ENCODE measurements at regions of chr6 and their contacts with region 1.

Region 1: GRCh38 chr6:79777713-79778579 is 146.8 kb downstream of the SH3BGRL2 start:
- DNase-seq: peak; percentile 62 to 93 (median 84)

Region 2: GRCh38 chr6:79869600-79870084 is 91.7 kb after region 1 on chr6:
- intact Hi-C with region 1: loop called (anchors 5 kb)
- DNase-seq: peak; percentile 42 to 91 (median 82)

Measured in head of caudate nucleus (tissue), 42 donors.